RWPE1 (cell line): ENCODE measurements at regions of chr12 and their contacts with region 1.

Region 1: GRCh38 chr12:106999446-106999845 is 12.5 kb upstream of the MTERF2 start:
- DNase-seq: peak; percentile 75
- H3K27ac ChIP-seq: peak overlapping the region; percentile 49; the same call in 1 of the 2 replicates
- CTCF ChIP-seq: no peak

Region 2: DNA sequence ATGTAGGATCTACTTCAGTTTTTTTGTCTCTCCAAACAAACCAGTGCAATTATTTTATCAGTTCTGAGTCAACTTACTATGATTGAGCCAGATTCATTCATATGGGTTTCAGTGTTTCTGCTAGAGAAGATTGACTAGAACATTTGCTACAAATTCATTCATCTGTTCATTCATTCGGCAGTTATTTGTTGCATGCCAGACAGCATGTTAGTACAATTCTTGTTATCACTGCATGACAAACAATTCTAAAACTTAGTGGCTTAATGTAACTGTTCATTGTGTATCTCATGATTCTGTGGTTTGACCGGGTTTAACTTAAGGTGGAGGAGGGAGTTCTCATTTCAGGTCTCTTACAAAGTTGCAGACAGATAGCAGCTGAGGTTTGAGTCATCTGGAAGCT is 589.6 kb before region 1 on chr12:
- CTCF ChIA-PET with region 1: no interaction called
- POLR2A ChIA-PET with region 1: interaction called, 11 read pairs
- DNase-seq: no peak
- H3K27ac ChIP-seq: no peak overlapping the region
- CTCF ChIP-seq: no peak

Region 3: GRCh38 chr12:106766393-106766826 is 233.0 kb before region 1 on chr12:
- CTCF ChIA-PET with region 1: no interaction called
- POLR2A ChIA-PET with region 1: no interaction called
- DNase-seq: no peak
- H3K27ac ChIP-seq: no peak overlapping the region
- CTCF ChIP-seq: no peak